A549 (cell line): ENCODE measurements at regions of chr15 and their contacts with region 1.

Region 1: DNA sequence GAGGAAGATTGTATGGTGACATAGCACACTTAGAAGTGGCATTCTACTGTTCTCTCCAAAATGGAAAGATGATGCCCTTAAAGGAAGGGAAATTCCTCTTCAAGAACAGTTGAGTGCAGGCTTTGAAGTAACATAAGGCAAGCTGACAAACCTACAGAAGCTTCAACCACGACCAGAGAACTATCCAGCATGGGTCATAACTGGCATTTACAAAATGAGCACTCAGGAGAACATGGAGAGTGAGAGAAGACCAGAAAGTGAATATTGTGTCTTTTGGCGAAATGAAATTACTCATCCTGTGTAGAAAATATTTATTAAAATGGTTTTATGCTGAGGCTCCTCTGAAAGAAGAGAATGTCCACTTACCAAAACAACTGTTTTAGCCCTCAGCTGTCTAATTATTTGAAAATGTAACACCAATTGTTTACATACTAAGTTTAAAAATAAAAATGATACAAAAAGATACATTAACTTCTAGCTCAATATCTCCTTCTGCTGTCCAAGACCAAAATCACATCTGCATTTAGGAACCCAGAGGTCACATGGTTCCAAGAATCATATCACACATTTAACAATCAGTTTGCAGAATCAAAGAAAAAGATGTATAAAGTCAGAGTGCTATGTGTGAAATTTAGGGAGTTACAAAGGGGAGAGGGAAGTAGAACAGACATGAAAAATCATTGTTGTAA is 216.9 kb downstream of the ATP8B4 start:
- DNase-seq: peak in 1 of 2 experiments; percentile 49
- ATAC-seq: peak in 1 of 2 experiments; percentile 66; a peak in 3 of 6 replicates
- H3K4me3 ChIP-seq: no peak overlapping the region
- H3K27ac ChIP-seq: peak overlapping the region; percentile 73 to 84
- H3K4me1 ChIP-seq: peaks cover 57% of the 10 kb centered on the region
- CTCF ChIP-seq: peak; percentile 72
- EP300 ChIP-seq: no peak
- POLR2A ChIP-seq: no peak
- RAD21 ChIP-seq: peak; percentile 78 to 85

Region 2: DNA sequence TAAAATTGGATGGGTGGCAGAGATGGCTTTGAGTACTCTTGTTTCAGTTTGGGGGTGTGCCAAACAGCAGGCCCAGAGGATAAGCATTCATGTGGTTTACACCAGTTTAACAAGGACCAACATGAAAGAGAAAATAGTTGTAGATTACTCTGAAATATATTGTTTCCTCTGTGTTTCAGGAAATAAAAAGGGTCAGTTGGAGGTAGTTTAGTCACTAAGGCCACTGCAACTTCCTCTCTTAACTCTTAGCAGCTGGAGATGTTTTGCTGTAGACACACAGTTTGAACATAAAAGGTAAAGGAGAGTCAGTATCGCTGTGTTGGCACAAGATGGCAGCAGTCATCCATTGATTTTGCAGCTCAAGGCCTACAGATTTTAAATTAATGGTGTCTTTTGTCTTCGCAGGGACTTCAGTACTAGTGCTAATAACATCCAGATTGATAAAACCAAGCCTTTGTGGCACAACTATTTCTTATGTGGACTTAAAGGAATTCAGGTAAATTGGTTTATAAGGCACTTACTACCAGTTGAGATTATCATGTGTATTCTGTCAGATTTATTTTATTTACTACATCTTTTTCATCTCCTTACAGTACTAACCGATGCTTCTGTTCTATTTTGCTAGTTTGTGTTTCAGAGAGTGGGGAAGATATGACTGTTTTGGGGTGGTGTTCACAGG is 666.6 kb before region 1 on chr15:
- CTCF ChIA-PET with region 1: interaction called, 12 read pairs
- POLR2A ChIA-PET with region 1: no interaction called
- DNase-seq: peak in 1 of 2 experiments; percentile 56
- ATAC-seq: peak in 1 of 2 experiments; percentile 85; a peak in 3 of 6 replicates
- H3K4me3 ChIP-seq: no peak overlapping the region
- H3K27ac ChIP-seq: peak overlapping the region in 1 of 2 experiments; percentile 50; a peak in 2 of 6 replicates
- H3K4me1 ChIP-seq: peaks cover 9% of the 10 kb centered on the region
- CTCF ChIP-seq: peak; percentile 67
- EP300 ChIP-seq: no peak
- POLR2A ChIP-seq: no peak
- RAD21 ChIP-seq: peak; percentile 78 to 82

Region 3: GRCh38 chr15:49855917-49856637 is 46.1 kb before region 1 on chr15:
- CTCF ChIA-PET with region 1: interaction called, 15 read pairs
- POLR2A ChIA-PET with region 1: no interaction called
- DNase-seq: peak in 1 of 2 experiments; percentile 91
- ATAC-seq: peak; percentile 86 to 91
- H3K4me3 ChIP-seq: no peak overlapping the region
- H3K27ac ChIP-seq: peak overlapping the region; percentile 88 to 89
- H3K4me1 ChIP-seq: peaks cover 45% of the 10 kb centered on the region
- CTCF ChIP-seq: no peak
- EP300 ChIP-seq: peak; percentile 99 to 100
- POLR2A ChIP-seq: no peak
- RAD21 ChIP-seq: peak; percentile 27 to 84

Region 4: DNA sequence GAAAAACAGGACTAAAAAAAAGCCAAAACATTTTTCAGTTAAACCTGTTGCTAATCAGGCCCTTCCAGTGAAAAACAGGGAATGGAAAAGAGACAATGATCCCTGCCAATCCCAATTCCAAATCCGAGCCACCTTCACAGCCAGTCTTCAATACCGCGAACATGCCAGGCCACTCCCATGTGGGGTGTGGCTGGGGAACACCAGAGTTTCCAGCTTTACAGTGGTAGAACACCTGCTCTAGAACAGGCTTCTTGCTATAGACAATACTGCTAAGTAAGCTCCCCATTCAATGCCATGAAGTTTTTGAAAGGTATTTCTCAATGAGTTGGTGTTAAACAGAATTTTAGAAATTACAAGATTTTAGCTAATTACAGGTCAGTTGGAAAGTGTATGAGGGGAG is 11.5 kb before region 1 on chr15:
- CTCF ChIA-PET with region 1: interaction called, 26 read pairs
- POLR2A ChIA-PET with region 1: no interaction called
- DNase-seq: no peak
- ATAC-seq: no peak
- H3K4me3 ChIP-seq: no peak overlapping the region
- H3K27ac ChIP-seq: no peak overlapping the region
- H3K4me1 ChIP-seq: no peaks in the 10 kb centered on the region
- CTCF ChIP-seq: no peak
- EP300 ChIP-seq: no peak
- POLR2A ChIP-seq: no peak
- RAD21 ChIP-seq: no peak

Region 5: DNA sequence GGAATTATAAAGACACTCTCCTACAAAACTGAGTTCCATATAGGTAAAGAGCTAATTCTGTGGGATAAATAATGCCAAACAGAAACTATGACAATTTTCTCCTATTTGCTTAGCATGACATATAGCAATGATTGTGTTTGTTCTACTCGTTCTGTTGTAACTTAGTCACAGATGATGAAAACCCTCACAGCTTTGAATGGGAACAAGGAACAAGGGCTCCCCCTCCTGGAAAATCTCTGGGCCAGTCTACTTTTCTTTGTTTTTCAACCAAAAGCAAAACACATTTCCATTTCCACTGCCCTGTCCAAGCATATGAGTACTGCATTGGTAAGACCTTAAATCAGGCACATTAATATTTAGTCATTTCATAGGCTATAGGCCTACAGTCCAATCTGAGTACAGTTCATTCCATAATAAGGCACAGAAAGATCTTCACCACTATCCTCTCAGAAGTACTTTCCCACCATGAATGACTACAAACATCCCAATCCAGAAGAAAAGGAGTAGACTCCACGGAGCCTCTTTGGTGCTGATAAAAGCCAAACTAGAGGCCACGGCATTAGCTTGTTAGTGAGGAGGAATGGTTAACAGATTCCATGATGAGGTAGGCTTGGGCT is 149.8 kb after region 1 on chr15:
- CTCF ChIA-PET with region 1: interaction called, 21 read pairs
- POLR2A ChIA-PET with region 1: no interaction called
- DNase-seq: peak; percentile 49 to 87
- ATAC-seq: peak; percentile 90 to 95
- H3K4me3 ChIP-seq: no peak overlapping the region; the same call in 2 of the 3 replicates
- H3K27ac ChIP-seq: peak overlapping the region; percentile 61 to 77
- H3K4me1 ChIP-seq: peaks cover 21% of the 10 kb centered on the region
- CTCF ChIP-seq: peak; percentile 97
- EP300 ChIP-seq: peak in 1 of 2 experiments; percentile 24; a peak in 1 of 5 replicates
- POLR2A ChIP-seq: no peak
- RAD21 ChIP-seq: peak; percentile 98 to 99